Mammary epithelial cell (primary cell): ENCODE measurements at regions of chr12 and their contacts with region 1.

Region 1: GRCh38 chr12:11015775-11016430 is 6.5 kb downstream of the TAS2R19 start:
- DNase-seq: no peak
- H3K4me3 ChIP-seq: no peak overlapping the region
- H3K27ac ChIP-seq: no peak overlapping the region
- H3K4me1 ChIP-seq: no peaks in the 10 kb centered on the region
- H3K27me3 ChIP-seq: no peaks in the 10 kb centered on the region
- CTCF ChIP-seq: no peak

Region 2: GRCh38 chr12:11067514-11067913 is 51.6 kb after region 1 on chr12:
- CTCF ChIA-PET with region 1: no interaction called
- dilution Hi-C with region 1: no loop called
- in situ Hi-C with region 1: loop called in 1 of 2 experiments (anchors 5 kb)
- intact Hi-C with region 1: loop called (anchors 1 kb)
- DNase-seq: peak; percentile 17
- H3K4me3 ChIP-seq: no peak overlapping the region
- H3K27ac ChIP-seq: no peak overlapping the region
- H3K4me1 ChIP-seq: no peaks in the 10 kb centered on the region
- H3K27me3 ChIP-seq: no peaks in the 10 kb centered on the region
- CTCF ChIP-seq: no peak